Activated CD4-positive, alpha-beta T cell treated with anti-CD3 and anti-CD28 coated beads for 36 hours (primary cell): ENCODE measurements at regions of chr18 and their contacts with region 1.

Region 1: GRCh38 chr18:5237723-5238370 is 40.8 kb upstream of the AKAIN1 start:
- DNase-seq: peak; percentile 92
- ATAC-seq: peak; percentile 94
- H3K4me3 Mint-ChIP-seq: peak overlapping the region; percentile 93
- H3K27ac Mint-ChIP-seq: peak overlapping the region; percentile 96
- H3K4me1 Mint-ChIP-seq: peaks cover 34% of the 10 kb centered on the region
- H3K27me3 Mint-ChIP-seq: peaks cover 3% of the 10 kb centered on the region

Region 2: DNA sequence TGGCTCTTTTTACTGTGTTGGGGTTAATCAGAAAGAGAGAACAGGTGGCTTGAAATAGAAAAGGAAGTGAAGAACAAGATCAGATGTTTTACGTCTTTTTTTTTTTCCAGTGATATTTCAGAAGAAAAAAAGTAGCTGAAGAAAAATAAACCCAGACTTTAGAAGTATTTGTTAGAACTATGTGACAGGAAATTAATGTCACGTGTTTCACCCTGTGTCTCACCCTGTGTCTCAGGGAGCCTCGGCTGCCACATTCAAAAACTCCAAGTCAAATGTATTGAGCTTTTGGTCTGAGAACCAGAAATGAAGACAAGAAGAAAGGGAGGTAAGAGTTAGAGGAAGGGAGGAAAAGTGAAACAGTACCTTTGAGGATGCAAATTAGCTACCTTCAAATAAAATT is 78.8 kb before region 1 on chr18:
- CTCF ChIA-PET with region 1: interaction called, 3 read pairs
- POLR2A ChIA-PET with region 1: no interaction called
- intact Hi-C with region 1: loop called (anchors 5 kb)
- DNase-seq: no peak
- ATAC-seq: peak; percentile 73
- H3K4me3 Mint-ChIP-seq: no peak overlapping the region
- H3K27ac Mint-ChIP-seq: peak overlapping the region; percentile 85
- H3K4me1 Mint-ChIP-seq: peaks cover 32% of the 10 kb centered on the region
- H3K27me3 Mint-ChIP-seq: no peaks in the 10 kb centered on the region

Region 3: GRCh38 chr18:5295981-5296705 is 58.3 kb after region 1 on chr18:
- CTCF ChIA-PET with region 1: interaction called, 14 read pairs
- POLR2A ChIA-PET with region 1: interaction called, 36 read pairs
- intact Hi-C with region 1: loop called (anchors 1 kb)
- DNase-seq: peak; percentile 96
- ATAC-seq: peak; percentile 64
- H3K4me3 Mint-ChIP-seq: peak overlapping the region; percentile 89
- H3K27ac Mint-ChIP-seq: peak overlapping the region; percentile 98
- H3K4me1 Mint-ChIP-seq: peaks cover 34% of the 10 kb centered on the region
- H3K27me3 Mint-ChIP-seq: peaks cover under 1% of the 10 kb centered on the region

Region 4: GRCh38 chr18:5309888-5310470 is 72.1 kb after region 1 on chr18:
- CTCF ChIA-PET with region 1: no interaction called
- POLR2A ChIA-PET with region 1: no interaction called
- intact Hi-C with region 1: loop called in 1 of 2 experiments (anchors 5 kb)
- DNase-seq: peak; percentile 56
- ATAC-seq: peak; percentile 96
- H3K4me3 Mint-ChIP-seq: peak overlapping the region; percentile 66
- H3K27ac Mint-ChIP-seq: peak overlapping the region; percentile 80
- H3K4me1 Mint-ChIP-seq: peaks cover 22% of the 10 kb centered on the region
- H3K27me3 Mint-ChIP-seq: no peaks in the 10 kb centered on the region